ENCODE measurements at regions of chr19 and their contacts with region 1.

Region 1: GRCh38 chr19:17871878-17872250 is at the start of gene SLC5A5:
- DNase-seq: no peak
- H3K4me3 ChIP-seq: no peak within 1 kb of the TSS
- H3K27ac ChIP-seq: no peak within 1 kb of the TSS
- H3K27me3 ChIP-seq: peaks cover 57% of the 10 kb centered on the region
- CTCF ChIP-seq: no peak
- polyA plus RNA-seq, gene SLC5A5: not detected in 2 replicates

Region 2: DNA sequence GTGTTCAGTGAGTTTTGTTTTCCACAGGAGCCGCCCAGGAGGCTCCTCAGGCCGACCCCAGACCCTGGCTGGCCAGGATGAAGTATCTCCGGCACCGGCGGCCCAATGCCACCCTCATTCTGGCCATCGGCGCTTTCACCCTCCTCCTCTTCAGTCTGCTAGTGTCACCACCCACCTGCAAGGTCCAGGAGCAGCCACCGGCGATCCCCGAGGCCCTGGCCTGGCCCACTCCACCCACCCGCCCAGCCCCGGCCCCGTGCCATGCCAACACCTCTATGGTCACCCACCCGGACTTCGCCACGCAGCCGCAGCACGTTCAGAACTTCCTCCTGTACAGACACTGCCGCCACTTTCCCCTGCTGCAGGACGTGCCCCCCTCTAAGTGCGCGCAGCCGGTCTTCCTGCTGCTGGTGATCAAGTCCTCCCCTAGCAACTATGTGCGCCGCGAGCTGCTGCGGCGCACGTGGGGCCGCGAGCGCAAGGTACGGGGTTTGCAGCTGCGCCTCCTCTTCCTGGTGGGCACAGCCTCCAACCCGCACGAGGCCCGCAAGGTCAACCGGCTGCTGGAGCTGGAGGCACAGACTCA is 64.0 kb before region 1 on chr19:
- CTCF ChIA-PET with region 1: no interaction called
- POLR2A ChIA-PET with region 1: no interaction called
- DNase-seq: no peak
- H3K4me3 ChIP-seq: no peak overlapping the region
- H3K27ac ChIP-seq: no peak overlapping the region
- H3K27me3 ChIP-seq: peaks cover 6% of the 10 kb centered on the region
- CTCF ChIP-seq: no peak

Region 3: DNA sequence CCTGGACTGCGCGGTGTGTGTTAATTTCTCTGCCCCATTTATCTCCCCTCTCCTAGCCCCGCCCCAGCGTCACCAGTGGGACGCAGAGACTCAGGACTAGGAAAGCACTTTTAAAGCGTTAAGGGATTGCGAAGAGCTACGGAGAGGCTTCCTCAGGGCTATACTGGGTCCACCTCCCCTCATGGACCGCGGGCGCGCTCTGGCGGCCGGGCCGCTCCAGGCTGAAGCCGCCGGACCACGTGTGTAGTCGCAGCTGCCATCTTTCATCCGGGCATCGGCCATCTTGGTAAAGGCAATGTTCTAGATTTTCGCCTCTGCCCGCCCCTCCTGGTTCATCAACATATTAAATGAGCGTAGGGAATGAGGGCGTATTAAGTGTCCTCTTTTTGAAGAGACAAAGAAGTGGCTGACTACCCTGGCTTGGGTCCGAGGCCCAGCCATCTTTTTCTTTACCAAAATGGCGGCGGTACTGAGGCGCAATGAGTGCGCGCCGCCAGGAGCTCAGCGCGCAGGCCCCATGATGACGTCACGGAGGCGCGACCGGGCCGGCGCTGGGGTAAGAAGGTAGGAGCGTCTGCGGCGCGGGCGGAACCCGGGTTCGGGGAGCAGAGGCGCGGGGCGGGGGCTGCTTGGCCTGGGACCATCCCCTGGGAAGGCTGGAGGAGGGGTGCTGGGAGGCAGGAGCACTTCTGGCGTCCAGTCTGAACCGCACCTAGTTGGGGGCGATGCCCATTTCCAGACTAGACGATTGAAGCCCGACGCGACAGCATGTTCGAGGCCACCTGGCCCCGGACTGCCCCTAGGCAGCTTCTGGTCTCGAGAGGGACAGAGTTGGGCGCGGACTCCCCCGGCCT is 60.8 kb after region 1 on chr19 and contains the start of gene CCDC124:
- CTCF ChIA-PET with region 1: interaction called, 27 read pairs
- POLR2A ChIA-PET with region 1: interaction called, 13 read pairs
- DNase-seq: peak; percentile 68
- H3K4me3 ChIP-seq: peak within 1 kb of the TSS; percentile 98
- H3K27ac ChIP-seq: peak within 1 kb of the TSS; percentile 84
- H3K27me3 ChIP-seq: peaks cover 3% of the 10 kb centered on the region
- CTCF ChIP-seq: peak; percentile 94
- polyA plus RNA-seq, gene CCDC124: 36.0 and 40.9 TPM in 2 replicates

Region 4: GRCh38 chr19:17938092-17938845 is 66.4 kb after region 1 on chr19:
- CTCF ChIA-PET with region 1: interaction called, 27 read pairs
- POLR2A ChIA-PET with region 1: interaction called, 13 read pairs
- DNase-seq: peak; percentile 65
- H3K4me3 ChIP-seq: no peak overlapping the region
- H3K27ac ChIP-seq: no peak overlapping the region
- H3K27me3 ChIP-seq: no peaks in the 10 kb centered on the region
- CTCF ChIP-seq: peak; percentile 94

Measured in AG04450 (cell line).